B cell (primary cell): ENCODE measurements at regions of chr5 and their contacts with region 1.

Region 1: DNA sequence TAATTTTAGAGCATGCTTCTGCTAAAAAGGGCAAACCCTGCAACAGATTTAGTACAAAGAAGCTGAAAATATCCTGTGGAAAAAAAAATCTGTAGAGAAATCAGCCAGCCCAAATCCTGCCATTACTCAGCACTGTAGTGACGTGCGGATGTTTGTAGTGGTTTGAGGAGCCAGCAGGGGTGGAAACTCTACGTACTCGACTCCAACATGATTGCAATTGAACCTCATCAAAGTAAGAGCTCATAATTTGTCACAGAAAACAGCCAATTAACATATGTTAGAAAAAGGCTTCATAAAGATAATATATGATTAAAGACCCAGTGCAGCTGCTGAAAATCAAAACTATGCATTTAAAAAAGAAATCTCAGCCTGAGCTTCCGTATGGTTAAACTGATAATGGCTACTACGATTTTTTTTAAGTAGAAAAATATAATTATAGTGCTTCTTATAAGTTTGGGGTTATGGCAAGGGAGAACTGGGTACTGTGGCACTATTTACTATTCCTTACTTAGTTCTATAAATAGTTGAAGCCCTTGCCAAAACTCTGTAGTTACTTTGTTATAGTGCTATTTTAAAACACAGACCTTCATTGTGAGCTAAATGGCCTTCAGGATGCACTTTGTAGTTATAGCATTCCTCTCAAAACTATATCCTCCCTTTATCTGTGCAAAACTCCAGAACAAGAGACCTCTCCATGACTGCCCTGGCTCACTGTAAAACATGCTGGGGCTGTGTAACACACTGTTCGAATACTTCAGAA is 49.4 kb downstream of the MEF2C start:
- DNase-seq: peak; percentile 65
- ATAC-seq: peak; percentile 66
- H3K4me3 ChIP-seq: peak overlapping the region in 3 of 5 experiments; percentile 1 to 47 (median 16)
- H3K4me3 Mint-ChIP-seq: peak overlapping the region; percentile 87
- H3K27ac ChIP-seq: peak overlapping the region; percentile 58 to 94
- H3K27ac Mint-ChIP-seq: peak overlapping the region; percentile 94
- H3K4me1 ChIP-seq: peaks cover 71 to 86% of the 10 kb centered on the region in 2 donors
- H3K4me1 Mint-ChIP-seq: peaks cover 77% of the 10 kb centered on the region
- H3K27me3 ChIP-seq: no peaks in the 10 kb centered on the region
- H3K27me3 Mint-ChIP-seq: no peaks in the 10 kb centered on the region
- CTCF ChIP-seq: no peak

Region 2: GRCh38 chr5:88159591-88159990 is 674.0 kb before region 1 on chr5:
- CTCF ChIA-PET with region 1: no interaction called
- POLR2A ChIA-PET with region 1: no interaction called
- intact Hi-C with region 1: no loop called
- DNase-seq: no peak
- ATAC-seq: no peak
- H3K4me3 ChIP-seq: no peak overlapping the region
- H3K4me3 Mint-ChIP-seq: no peak overlapping the region
- H3K27ac ChIP-seq: no peak overlapping the region
- H3K27ac Mint-ChIP-seq: no peak overlapping the region
- H3K4me1 ChIP-seq: no peaks in the 10 kb centered on the region
- H3K4me1 Mint-ChIP-seq: no peaks in the 10 kb centered on the region
- H3K27me3 ChIP-seq: peaks cover 0 to 3% (median 0%) of the 10 kb centered on the region in 4 experiments
- H3K27me3 Mint-ChIP-seq: peaks cover 19% of the 10 kb centered on the region
- CTCF ChIP-seq: no peak

Region 3: GRCh38 chr5:88819301-88819999 is 14.1 kb before region 1 on chr5:
- CTCF ChIA-PET with region 1: interaction called, 20 read pairs
- POLR2A ChIA-PET with region 1: interaction called, 6 read pairs
- intact Hi-C with region 1: no loop called
- DNase-seq: peak; percentile 40
- ATAC-seq: peak; percentile 56
- H3K4me3 ChIP-seq: peak overlapping the region in 3 of 5 experiments; percentile 0 to 35 (median 15)
- H3K4me3 Mint-ChIP-seq: peak overlapping the region; percentile 72
- H3K27ac ChIP-seq: peak overlapping the region; percentile 35 to 94
- H3K27ac Mint-ChIP-seq: peak overlapping the region; percentile 88
- H3K4me1 ChIP-seq: peaks cover 51 to 92% of the 10 kb centered on the region in 2 donors
- H3K4me1 Mint-ChIP-seq: peaks cover 72% of the 10 kb centered on the region
- H3K27me3 ChIP-seq: no peaks in the 10 kb centered on the region
- H3K27me3 Mint-ChIP-seq: no peaks in the 10 kb centered on the region
- CTCF ChIP-seq: no peak

Region 4: DNA sequence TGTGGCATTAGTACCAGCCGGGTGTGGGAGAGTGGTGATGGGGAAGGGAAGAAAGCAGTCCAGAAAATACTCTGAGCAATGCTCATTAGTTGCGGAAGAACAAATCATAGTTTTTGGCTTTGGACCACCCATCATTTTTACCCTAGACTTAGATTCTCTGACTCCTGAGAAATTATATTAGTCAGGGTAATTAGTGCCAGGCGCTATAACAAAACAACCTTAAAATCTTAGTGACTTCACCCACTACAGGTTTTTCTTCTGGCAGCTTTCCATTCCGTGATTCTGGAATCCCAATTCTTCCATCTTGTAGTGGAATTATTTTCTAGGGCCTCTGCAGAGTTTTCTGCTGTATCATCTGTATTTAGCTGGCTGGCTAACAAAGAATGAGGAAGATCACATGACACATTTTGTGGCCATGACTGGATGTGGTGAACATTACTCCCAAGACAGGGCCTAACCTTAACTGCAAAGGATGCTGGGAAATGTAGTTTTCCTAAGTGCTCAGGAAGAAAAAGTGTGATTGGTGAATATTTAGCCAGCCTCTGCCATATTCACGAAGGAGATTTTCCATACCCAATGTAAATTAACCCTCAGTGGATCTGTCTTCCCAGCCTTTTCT is 422.4 kb after region 1 on chr5:
- CTCF ChIA-PET with region 1: no interaction called
- POLR2A ChIA-PET with region 1: no interaction called
- intact Hi-C with region 1: no loop called
- DNase-seq: peak; percentile 27
- ATAC-seq: no peak
- H3K4me3 ChIP-seq: no peak overlapping the region
- H3K4me3 Mint-ChIP-seq: no peak overlapping the region
- H3K27ac ChIP-seq: no peak overlapping the region
- H3K27ac Mint-ChIP-seq: no peak overlapping the region
- H3K4me1 ChIP-seq: peaks cover 12 to 19% of the 10 kb centered on the region in 2 donors
- H3K4me1 Mint-ChIP-seq: peaks cover 28% of the 10 kb centered on the region
- H3K27me3 ChIP-seq: no peaks in the 10 kb centered on the region
- H3K27me3 Mint-ChIP-seq: no peaks in the 10 kb centered on the region
- CTCF ChIP-seq: no peak